HEK293T (cell line): ENCODE measurements at regions of chr3 and their contacts with region 1.

Region 1: GRCh38 chr3:146156095-146156494 is 4.9 kb downstream of the PLOD2 start:
- DNase-seq: no peak

Region 2: GRCh38 chr3:146065573-146066006 is 90.5 kb before region 1 on chr3:
- CTCF ChIA-PET with region 1: interaction called, 10 read pairs
- POLR2A ChIA-PET with region 1: interaction called, 3 read pairs
- DNase-seq: no peak

Region 3: DNA sequence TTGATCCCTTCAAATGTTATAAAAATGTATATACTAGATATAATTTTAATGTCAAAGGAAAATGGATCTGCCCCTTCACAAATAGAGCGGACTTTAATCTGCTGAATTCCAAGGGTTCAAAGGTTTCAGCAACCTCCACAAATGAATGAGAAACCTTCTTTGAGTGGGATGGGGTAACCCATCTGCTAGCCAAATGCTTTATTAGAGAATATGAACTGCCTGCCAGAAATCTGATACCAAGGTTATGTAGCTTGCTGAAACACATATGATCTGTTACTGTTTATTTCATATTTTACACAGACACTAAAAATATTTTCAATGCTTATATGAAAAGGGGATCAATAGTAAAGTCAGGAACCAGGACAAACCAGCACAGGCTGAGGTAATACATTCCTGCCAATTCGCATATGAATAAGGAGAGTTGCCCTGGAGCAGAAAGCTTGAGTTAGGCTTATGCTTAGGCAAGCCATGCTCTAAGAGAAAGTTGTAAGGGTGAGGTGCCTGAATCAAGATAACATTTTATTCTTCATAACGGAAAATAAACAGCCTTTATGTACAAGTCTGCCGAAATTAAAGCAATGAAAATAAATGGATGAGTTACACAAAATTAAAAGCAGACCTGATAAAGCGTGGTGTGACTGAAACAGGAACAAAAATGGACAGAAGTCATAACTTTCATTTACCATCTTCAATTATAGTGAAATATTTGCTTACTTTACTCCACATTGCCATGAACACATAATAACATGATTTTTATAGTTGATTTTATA is 21.6 kb before region 1 on chr3:
- CTCF ChIA-PET with region 1: no interaction called
- POLR2A ChIA-PET with region 1: no interaction called
- DNase-seq: no peak